GM12878 (cell line): ENCODE measurements at regions of chr3 and their contacts with region 1.

Region 1: DNA sequence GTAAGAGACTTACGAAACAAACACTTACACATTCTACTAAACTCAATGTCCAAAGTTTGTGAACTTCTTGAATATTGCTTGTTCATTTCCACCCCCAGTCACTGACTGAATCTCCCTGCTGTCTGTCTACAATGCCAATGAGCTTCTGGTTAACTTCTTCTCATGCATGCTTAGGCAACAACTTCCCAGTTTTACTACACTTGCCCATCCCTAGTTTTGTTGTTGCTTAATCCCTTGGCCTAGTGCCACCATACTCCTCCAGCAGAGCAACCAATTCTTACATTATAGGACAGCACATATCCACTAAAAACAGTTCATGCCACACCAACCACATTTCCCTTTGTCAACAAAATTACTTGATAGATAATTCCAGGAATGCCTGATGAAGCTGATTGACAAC is 40.9 kb upstream of the CCR2 start:
- DNase-seq: no peak
- ATAC-seq: no peak
- H3K4me3 ChIP-seq: no peak overlapping the region
- H3K27ac ChIP-seq: no peak overlapping the region
- H3K4me1 ChIP-seq: peaks cover 5% of the 10 kb centered on the region; the same call in 1 of the 2 replicates
- H3K27me3 ChIP-seq: no peaks in the 10 kb centered on the region; a peak in 1 of 4 replicates
- CTCF ChIP-seq: no peak
- EP300 ChIP-seq: no peak
- POLR2A ChIP-seq: no peak
- RAD21 ChIP-seq: no peak

Region 2: GRCh38 chr3:46269556-46269955 is 43.4 kb before region 1 on chr3:
- CTCF ChIA-PET with region 1: no interaction called
- POLR2A ChIA-PET with region 1: no interaction called
- RAD21 ChIA-PET with region 1: no interaction called
- SMC1A ChIA-PET with region 1: no interaction called
- in situ Hi-C with region 1: no loop called
- intact Hi-C with region 1: no loop called
- DNase-seq: no peak
- ATAC-seq: peak; percentile 42
- H3K4me3 ChIP-seq: no peak overlapping the region
- H3K27ac ChIP-seq: no peak overlapping the region
- H3K4me1 ChIP-seq: peaks cover 7% of the 10 kb centered on the region; the same call in 1 of the 2 replicates
- H3K27me3 ChIP-seq: 0 out of 4 replicates have a peak, but pooled peaks cover 0 to 8% of the 10 kb centered on the region in 2 experiments
- CTCF ChIP-seq: no peak
- EP300 ChIP-seq: no peak; a peak in 1 of 4 replicates
- POLR2A ChIP-seq: no peak
- RAD21 ChIP-seq: no peak

Region 3: GRCh38 chr3:46297658-46298463 is 15.1 kb before region 1 on chr3:
- CTCF ChIA-PET with region 1: interaction called, 4 read pairs
- POLR2A ChIA-PET with region 1: interaction called, 3 read pairs
- RAD21 ChIA-PET with region 1: interaction called, 3 read pairs
- SMC1A ChIA-PET with region 1: interaction called, 22 read pairs
- in situ Hi-C with region 1: no loop called
- intact Hi-C with region 1: no loop called
- DNase-seq: no peak
- ATAC-seq: peak; percentile 20
- H3K4me3 ChIP-seq: no peak overlapping the region
- H3K27ac ChIP-seq: peak overlapping the region; percentile 47; the same call in 1 of the 2 replicates
- H3K4me1 ChIP-seq: peaks cover 68% of the 10 kb centered on the region
- H3K27me3 ChIP-seq: no peaks in the 10 kb centered on the region
- CTCF ChIP-seq: no peak
- EP300 ChIP-seq: no peak
- POLR2A ChIP-seq: no peak
- RAD21 ChIP-seq: no peak